HCT116 (cell line): ENCODE measurements at regions of chr17 and their contacts with region 1.

Region 1: DNA sequence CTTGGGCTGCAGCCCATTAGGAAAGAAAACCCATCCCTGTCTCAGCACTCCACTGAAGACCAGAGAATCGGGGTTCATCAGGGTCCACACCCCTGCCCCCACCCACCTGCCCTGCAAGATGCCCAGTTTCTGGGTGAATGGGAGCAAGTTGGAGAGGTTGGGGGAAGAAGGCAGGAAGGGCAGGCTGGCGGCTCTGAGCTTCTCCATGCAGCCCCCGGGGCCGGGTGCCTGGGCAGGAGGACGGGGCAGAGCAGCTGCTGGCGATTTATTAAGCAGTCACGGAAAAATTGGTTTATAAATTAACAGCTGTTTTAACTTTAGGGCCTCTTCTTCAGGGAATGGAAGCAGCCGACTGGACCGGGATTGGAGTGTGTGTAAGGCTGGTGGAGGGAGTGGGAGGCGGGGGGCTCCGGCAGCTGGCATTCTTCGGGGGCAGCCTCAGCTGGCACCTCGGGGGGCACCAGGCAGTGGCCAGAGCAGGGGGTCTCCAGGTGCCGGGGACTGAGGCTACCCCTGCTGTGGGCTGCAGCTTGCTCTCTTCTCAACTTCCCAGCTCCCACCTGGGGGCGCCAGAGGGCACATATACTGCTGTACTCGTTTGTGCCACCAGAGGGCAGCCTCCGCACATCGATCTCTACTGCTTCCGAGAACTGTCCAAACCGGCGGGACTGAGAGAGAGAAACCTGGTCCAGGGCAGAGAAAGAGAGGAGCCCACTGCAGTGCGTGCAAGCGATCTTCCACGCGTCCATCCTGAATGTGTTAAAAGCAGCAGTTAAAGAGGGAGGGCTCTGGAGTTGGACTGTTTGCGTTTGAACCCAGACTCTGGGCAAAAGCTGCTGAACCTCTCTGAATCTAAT is 5.0 kb upstream of the PPP1R1B start:
- DNase-seq: no peak
- ATAC-seq: peak; percentile 51
- H3K4me3 ChIP-seq: no peak overlapping the region
- H3K27ac ChIP-seq: no peak overlapping the region
- H3K4me1 ChIP-seq: peaks cover 19 to 34% of the 10 kb centered on the region in 2 experiments; a peak in 3 of 4 replicates
- H3K27me3 ChIP-seq: no peaks in the 10 kb centered on the region
- CTCF ChIP-seq: peak; percentile 100
- POLR2A ChIP-seq: no peak
- RAD21 ChIP-seq: peak; percentile 97

Region 2: GRCh38 chr17:39538866-39539265 is 82.9 kb before region 1 on chr17:
- CTCF ChIA-PET with region 1: interaction called, 10 read pairs
- POLR2A ChIA-PET with region 1: no interaction called
- RAD21 ChIA-PET with region 1: no interaction called
- intact Hi-C with region 1: no loop called
- DNase-seq: no peak
- ATAC-seq: no peak
- H3K4me3 ChIP-seq: no peak overlapping the region
- H3K27ac ChIP-seq: no peak overlapping the region
- H3K4me1 ChIP-seq: 0 out of 4 replicates have a peak, but pooled peaks cover 0 to 2% of the 10 kb centered on the region in 2 experiments
- H3K27me3 ChIP-seq: no peaks in the 10 kb centered on the region
- CTCF ChIP-seq: no peak
- POLR2A ChIP-seq: no peak
- RAD21 ChIP-seq: no peak

Region 3: GRCh38 chr17:39573447-39574298 is 48.1 kb before region 1 on chr17:
- CTCF ChIA-PET with region 1: interaction called, 16 read pairs
- POLR2A ChIA-PET with region 1: no interaction called
- RAD21 ChIA-PET with region 1: no interaction called
- intact Hi-C with region 1: no loop called
- DNase-seq: peak; percentile 27
- ATAC-seq: peak; percentile 94
- H3K4me3 ChIP-seq: peak overlapping the region; percentile 44 to 67
- H3K27ac ChIP-seq: peak overlapping the region; percentile 66
- H3K4me1 ChIP-seq: peaks cover 4 to 11% of the 10 kb centered on the region in 2 experiments; a peak in 2 of 4 replicates
- H3K27me3 ChIP-seq: no peaks in the 10 kb centered on the region
- CTCF ChIP-seq: no peak
- POLR2A ChIP-seq: no peak
- RAD21 ChIP-seq: no peak

Region 4: GRCh38 chr17:39643271-39643670 is 21.5 kb after region 1 on chr17:
- CTCF ChIA-PET with region 1: interaction called, 16 read pairs
- POLR2A ChIA-PET with region 1: no interaction called
- RAD21 ChIA-PET with region 1: no interaction called
- intact Hi-C with region 1: no loop called
- DNase-seq: no peak
- ATAC-seq: peak; percentile 56
- H3K4me3 ChIP-seq: no peak overlapping the region
- H3K27ac ChIP-seq: peak overlapping the region; percentile 15; the same call in 1 of the 2 replicates
- H3K4me1 ChIP-seq: peaks cover 23 to 41% of the 10 kb centered on the region in 2 experiments
- H3K27me3 ChIP-seq: no peaks in the 10 kb centered on the region
- CTCF ChIP-seq: no peak
- POLR2A ChIP-seq: no peak
- RAD21 ChIP-seq: no peak

Region 5: GRCh38 chr17:39671651-39672521 is 50.1 kb after region 1 on chr17:
- CTCF ChIA-PET with region 1: interaction called, 51 read pairs
- POLR2A ChIA-PET with region 1: interaction called, 3 read pairs
- RAD21 ChIA-PET with region 1: interaction called, 6 to 15 read pairs
- intact Hi-C with region 1: loop called (anchors 1 kb)
- DNase-seq: peak; percentile 18
- ATAC-seq: peak; percentile 77
- H3K4me3 ChIP-seq: no peak overlapping the region
- H3K27ac ChIP-seq: no peak overlapping the region; the same call in 1 of the 2 replicates
- H3K4me1 ChIP-seq: peaks cover 20 to 21% of the 10 kb centered on the region in 2 experiments; a peak in 3 of 4 replicates
- H3K27me3 ChIP-seq: no peaks in the 10 kb centered on the region
- CTCF ChIP-seq: peak; percentile 77 to 94 (median 81)
- POLR2A ChIP-seq: no peak
- RAD21 ChIP-seq: peak; percentile 86

Region 6: DNA sequence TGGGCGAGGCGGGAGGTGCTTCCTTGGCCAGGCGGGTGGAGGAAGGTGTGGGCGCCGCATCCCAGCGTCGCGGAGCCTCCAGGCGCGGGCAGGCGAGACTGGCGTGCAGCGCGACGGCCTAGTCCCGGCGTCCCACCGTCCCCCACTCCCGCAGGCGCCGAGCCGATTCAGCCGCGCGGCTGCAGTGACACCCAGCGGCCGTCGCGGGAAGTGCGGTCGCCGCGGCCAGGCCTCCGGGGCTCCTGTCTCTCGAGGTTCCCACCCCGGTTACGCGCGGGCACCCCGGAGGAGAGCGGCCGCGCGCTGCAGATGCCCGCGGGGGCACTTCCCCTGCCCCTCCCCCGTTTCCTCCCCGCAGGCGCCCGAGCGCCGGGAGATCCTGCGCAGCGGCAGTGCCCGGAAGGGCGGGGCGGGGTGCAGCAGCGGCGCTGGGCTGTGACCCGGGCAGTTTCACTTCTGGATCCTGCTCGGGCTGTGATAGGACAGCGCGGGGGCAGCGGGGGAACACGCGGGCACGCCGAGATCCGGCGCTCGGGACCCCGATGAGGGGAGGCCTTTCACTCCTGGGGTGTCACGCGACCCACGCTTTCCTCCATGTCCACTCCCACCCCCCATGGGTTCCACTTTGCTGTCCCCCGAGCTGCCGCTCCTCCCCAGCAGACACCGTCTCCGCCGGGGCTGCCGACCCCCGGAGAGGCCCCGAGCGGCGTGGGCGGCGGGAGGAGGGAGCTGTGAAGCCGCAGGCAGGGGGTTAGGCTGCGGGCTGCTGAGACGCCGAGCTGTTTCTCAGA is 132.6 kb after region 1 on chr17:
- CTCF ChIA-PET with region 1: interaction called, 16 read pairs
- POLR2A ChIA-PET with region 1: no interaction called
- RAD21 ChIA-PET with region 1: interaction called in 1 of 2 experiments, 3 read pairs
- intact Hi-C with region 1: loop called (anchors 1 kb)
- DNase-seq: peak; percentile 73
- ATAC-seq: peak; percentile 87
- H3K4me3 ChIP-seq: peak overlapping the region; percentile 54 to 65
- H3K27ac ChIP-seq: peak overlapping the region; percentile 91
- H3K4me1 ChIP-seq: peaks cover 33 to 55% of the 10 kb centered on the region in 2 experiments
- H3K27me3 ChIP-seq: peaks cover under 1% of the 10 kb centered on the region; the same call in 1 of the 2 replicates
- CTCF ChIP-seq: peak; percentile 72 to 95 (median 74)
- POLR2A ChIP-seq: peak; percentile 78
- RAD21 ChIP-seq: peak; percentile 97